B cell (primary cell): ENCODE measurements at regions of chr6 and their contacts with region 1.

Region 1: DNA sequence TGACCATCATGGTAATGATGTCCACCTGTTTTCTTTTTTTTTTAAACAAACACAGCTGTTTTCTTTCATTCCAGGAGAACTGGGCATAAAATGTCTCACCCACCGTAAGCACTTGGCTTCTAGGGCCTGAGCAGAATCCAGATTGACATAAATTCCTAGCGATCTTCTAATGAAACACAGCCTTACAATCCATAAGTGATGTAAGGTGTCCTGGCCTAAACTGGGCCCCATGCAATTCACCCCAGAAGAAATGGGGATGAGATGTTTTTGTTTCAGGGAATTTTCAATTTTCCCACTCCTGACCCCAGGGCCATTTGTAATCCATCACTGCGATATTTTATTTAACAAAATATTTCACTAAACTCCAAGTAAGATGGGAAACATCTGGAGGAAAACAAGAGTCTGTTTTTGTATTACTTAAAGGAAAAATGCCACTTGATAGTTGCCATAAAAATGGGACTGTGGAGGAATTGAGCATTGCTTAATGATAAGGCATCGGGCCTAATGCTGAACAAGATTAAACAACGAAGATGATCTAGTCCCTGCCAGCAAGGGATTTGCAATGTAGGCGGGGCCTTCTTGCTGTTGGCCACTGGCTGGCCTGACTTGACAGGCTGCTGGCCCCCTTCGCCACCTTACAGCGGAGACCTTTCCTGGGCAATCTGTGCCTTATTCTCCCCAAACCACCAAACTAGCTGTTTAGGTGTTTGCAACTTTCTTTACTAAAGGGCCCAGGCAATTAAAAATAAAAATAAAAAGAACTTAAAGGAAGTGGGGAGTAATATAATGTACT is 183.7 kb downstream of the CD109 start:
- DNase-seq: no peak
- ATAC-seq: no peak
- H3K4me3 ChIP-seq: no peak overlapping the region
- H3K4me3 Mint-ChIP-seq: no peak overlapping the region
- H3K27ac ChIP-seq: no peak overlapping the region
- H3K27ac Mint-ChIP-seq: no peak overlapping the region
- H3K4me1 ChIP-seq: no peaks in the 10 kb centered on the region
- H3K4me1 Mint-ChIP-seq: no peaks in the 10 kb centered on the region
- H3K27me3 ChIP-seq: no peaks in the 10 kb centered on the region
- H3K27me3 Mint-ChIP-seq: no peaks in the 10 kb centered on the region
- CTCF ChIP-seq: no peak

Region 2: GRCh38 chr6:73893696-73894095 is 14.0 kb after region 1 on chr6:
- CTCF ChIA-PET with region 1: no interaction called
- POLR2A ChIA-PET with region 1: no interaction called
- intact Hi-C with region 1: loop called (anchors 1 kb)
- DNase-seq: no peak
- ATAC-seq: no peak
- H3K4me3 ChIP-seq: no peak overlapping the region
- H3K4me3 Mint-ChIP-seq: no peak overlapping the region
- H3K27ac ChIP-seq: no peak overlapping the region
- H3K27ac Mint-ChIP-seq: no peak overlapping the region
- H3K4me1 ChIP-seq: no peaks in the 10 kb centered on the region
- H3K4me1 Mint-ChIP-seq: no peaks in the 10 kb centered on the region
- H3K27me3 ChIP-seq: peaks cover 0 to 4% (median 0%) of the 10 kb centered on the region in 4 experiments
- H3K27me3 Mint-ChIP-seq: no peaks in the 10 kb centered on the region
- CTCF ChIP-seq: no peak